Activated T-helper 2 cell treated with anti-CD3 and anti-CD28 coated beads, Interferon-gamma antibody, Interleukin-2, Interleukin-4, amounts not matched to agents 10 μg/mL and 5 μg/mL and 100 μg/mL, durations not matched to agents 14 hours and 24 hours and 36 hours (primary cell): ENCODE measurements at regions of chr7 and their contacts with region 1.

Region 1: GRCh38 chr7:105298439-105298907 is 90.2 kb downstream of the SRPK2 start:
- DNase-seq: peak; percentile 23
- H3K4me3 Mint-ChIP-seq: peak overlapping the region; percentile 45
- H3K27ac Mint-ChIP-seq: peak overlapping the region; percentile 92
- H3K4me1 Mint-ChIP-seq: peaks cover 50% of the 10 kb centered on the region
- H3K27me3 Mint-ChIP-seq: no peaks in the 10 kb centered on the region

Region 2: GRCh38 chr7:104900525-104901239 is 397.8 kb before region 1 on chr7:
- intact Hi-C with region 1: no loop called
- DNase-seq: no peak
- H3K4me3 Mint-ChIP-seq: no peak overlapping the region
- H3K27ac Mint-ChIP-seq: no peak overlapping the region
- H3K4me1 Mint-ChIP-seq: peaks cover 7% of the 10 kb centered on the region
- H3K27me3 Mint-ChIP-seq: peaks cover 10% of the 10 kb centered on the region

Region 3: GRCh38 chr7:105149827-105150226 is 148.6 kb before region 1 on chr7:
- intact Hi-C with region 1: loop called (anchors 10 kb)
- DNase-seq: no peak
- H3K4me3 Mint-ChIP-seq: no peak overlapping the region
- H3K27ac Mint-ChIP-seq: no peak overlapping the region
- H3K4me1 Mint-ChIP-seq: peaks cover 18% of the 10 kb centered on the region
- H3K27me3 Mint-ChIP-seq: no peaks in the 10 kb centered on the region

Region 4: DNA sequence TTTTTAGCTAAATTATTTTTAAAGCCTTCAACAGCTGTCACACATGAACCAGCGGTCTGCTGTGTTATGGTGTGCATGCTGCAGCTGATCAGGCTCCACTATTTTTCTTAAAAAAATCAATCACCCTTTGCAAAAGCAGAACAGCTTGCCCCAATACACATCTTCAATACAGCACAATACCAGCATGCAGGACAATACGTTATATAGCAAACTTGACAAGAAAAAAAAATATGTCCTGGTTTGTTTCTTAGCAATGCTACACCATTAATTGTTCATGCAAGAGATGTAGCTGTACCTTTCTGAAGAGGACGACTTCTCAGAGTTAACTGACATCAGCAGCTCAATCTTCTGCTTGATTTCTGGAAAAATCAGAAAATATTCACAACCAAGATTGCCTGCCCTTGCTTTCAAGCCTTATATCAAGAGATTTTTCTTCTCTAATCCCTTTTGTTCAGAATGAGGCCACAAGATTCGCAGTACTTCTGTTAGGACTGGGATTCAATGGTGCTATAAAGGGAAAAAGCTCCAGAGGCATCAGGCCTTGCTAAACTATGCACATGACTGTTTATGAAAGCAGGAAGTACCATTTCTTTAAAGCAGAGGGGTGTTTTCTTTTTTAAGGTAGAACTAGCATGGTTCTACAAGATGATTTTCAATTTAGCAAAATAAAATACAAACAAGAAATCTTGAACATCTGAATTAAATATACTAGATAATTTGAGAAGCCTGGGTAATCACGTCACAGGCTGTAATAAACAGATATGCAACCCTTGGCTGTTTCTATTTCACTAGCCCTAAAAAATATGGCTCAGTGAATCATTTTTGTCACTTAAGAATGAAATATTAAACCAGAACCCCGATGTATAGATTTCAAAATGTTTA is 29.7 kb before region 1 on chr7:
- intact Hi-C with region 1: loop called (anchors 1 kb)
- DNase-seq: no peak
- H3K4me3 Mint-ChIP-seq: peak overlapping the region; percentile 72
- H3K27ac Mint-ChIP-seq: peak overlapping the region; percentile 64
- H3K4me1 Mint-ChIP-seq: peaks cover 39% of the 10 kb centered on the region
- H3K27me3 Mint-ChIP-seq: no peaks in the 10 kb centered on the region

Region 5: DNA sequence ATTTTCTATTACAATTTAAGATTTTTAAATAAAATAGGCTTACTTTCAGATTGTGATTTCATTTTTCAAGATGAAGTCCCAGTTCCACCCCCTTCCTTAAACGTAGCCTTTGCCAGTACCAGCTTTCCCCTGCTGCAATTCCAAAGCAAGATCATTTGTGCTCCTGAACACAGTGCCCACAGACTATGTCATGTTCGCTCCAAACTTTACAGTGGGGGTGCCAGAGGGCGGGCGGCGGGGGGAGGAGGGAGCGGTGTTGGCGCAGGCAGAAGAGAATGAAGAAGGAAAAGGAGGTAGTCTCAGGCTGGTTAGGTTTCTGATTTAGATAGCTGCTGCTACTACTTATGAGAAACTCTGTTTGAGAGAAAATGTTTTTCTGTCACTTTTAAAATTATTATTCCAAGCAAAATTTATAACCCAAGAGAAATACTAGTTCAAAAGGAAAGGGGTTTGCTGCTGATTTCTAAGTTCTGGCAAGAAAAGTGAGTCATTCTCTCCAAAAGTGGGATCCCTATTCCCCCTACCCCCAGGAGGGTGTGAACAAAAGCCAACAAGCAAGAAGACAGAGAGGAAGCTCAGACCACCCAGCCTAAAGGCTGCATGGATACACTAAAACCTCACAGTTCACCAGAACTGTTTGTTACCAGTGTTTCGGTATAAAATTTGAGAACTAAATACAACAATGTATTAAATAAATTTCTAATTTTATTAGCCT is 19.3 kb before region 1 on chr7:
- intact Hi-C with region 1: no loop called
- DNase-seq: no peak
- H3K4me3 Mint-ChIP-seq: no peak overlapping the region
- H3K27ac Mint-ChIP-seq: no peak overlapping the region
- H3K4me1 Mint-ChIP-seq: peaks cover 13% of the 10 kb centered on the region
- H3K27me3 Mint-ChIP-seq: no peaks in the 10 kb centered on the region

Region 6: DNA sequence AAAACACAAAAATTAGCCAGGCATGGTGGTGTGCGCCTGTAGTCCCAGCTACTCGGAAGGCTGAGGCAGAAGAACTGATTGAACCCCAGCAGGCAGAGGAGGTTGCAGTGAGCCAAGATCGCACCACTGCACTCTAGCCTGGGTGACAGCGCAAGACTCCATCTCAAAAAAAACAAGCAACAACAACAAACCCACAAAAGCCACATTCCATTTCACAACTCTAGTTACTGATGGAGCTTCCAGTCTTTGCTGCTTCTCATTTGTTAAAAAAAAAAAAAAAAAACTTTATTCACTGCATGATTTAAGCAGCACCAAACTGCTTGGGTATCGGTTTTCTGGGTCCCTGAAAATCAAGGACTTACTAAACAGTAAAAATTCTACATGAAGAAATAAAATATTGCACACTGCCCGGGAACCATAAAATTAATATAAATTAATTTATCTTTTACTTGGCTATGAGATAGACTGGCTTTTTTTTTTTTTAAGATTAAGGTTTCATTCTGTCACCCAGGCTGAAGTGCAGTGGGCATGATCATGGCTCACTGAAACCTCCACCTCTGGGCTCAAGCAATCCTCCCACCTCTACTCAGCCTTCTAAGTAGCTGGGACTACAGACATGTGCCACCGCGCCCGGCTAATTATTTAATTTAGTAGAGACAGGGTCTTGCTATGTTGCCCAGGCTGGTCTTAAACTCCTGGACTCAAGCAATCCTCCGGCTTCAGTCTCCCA is 48.3 kb after region 1 on chr7:
- intact Hi-C with region 1: loop called (anchors 1 kb)
- DNase-seq: no peak
- H3K4me3 Mint-ChIP-seq: peak overlapping the region; percentile 17
- H3K27ac Mint-ChIP-seq: peak overlapping the region; percentile 47
- H3K4me1 Mint-ChIP-seq: peaks cover 39% of the 10 kb centered on the region
- H3K27me3 Mint-ChIP-seq: no peaks in the 10 kb centered on the region

Region 7: DNA sequence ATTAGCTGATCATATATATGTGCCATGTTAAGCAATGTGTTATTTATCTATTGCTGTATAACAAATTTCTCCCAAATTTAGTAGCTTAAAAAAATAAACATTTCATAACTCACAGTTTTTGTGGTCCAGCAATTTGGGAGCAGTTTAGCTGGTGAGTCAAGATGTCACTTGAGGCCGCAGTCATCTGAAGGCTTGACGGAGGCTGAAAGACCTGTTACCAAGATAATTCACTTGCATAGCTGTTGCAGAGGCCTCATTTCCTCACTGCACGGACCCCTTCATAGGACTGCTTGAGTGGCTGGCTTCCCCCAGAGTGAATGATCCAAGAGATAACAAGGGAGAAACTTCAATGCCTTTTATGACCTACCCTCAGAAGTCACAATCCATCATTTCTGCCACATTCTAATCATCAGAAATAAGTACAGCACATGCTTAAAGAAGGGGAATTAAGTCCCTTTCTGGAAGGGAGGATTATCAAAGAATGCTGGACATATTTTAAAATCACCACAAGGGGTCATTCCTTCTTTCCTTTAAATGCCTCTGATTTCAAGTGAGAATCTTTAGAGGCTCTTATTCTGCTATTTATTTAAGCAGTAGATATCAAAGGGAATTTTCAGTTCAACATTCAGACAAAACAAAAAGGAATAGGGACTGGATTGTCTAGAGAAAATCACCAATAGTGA is 100.7 kb after region 1 on chr7:
- intact Hi-C with region 1: no loop called
- DNase-seq: no peak
- H3K4me3 Mint-ChIP-seq: no peak overlapping the region
- H3K27ac Mint-ChIP-seq: no peak overlapping the region
- H3K4me1 Mint-ChIP-seq: peaks cover 2% of the 10 kb centered on the region
- H3K27me3 Mint-ChIP-seq: no peaks in the 10 kb centered on the region